AG04449 (cell line): ENCODE measurements at regions of chr11 and their contacts with region 1.

Region 1: GRCh38 chr11:76318744-76319384 is 62.1 kb downstream of the THAP12 start:
- DNase-seq: no peak
- H3K4me3 ChIP-seq: no peak overlapping the region
- CTCF ChIP-seq: peak; percentile 88

Region 2: DNA sequence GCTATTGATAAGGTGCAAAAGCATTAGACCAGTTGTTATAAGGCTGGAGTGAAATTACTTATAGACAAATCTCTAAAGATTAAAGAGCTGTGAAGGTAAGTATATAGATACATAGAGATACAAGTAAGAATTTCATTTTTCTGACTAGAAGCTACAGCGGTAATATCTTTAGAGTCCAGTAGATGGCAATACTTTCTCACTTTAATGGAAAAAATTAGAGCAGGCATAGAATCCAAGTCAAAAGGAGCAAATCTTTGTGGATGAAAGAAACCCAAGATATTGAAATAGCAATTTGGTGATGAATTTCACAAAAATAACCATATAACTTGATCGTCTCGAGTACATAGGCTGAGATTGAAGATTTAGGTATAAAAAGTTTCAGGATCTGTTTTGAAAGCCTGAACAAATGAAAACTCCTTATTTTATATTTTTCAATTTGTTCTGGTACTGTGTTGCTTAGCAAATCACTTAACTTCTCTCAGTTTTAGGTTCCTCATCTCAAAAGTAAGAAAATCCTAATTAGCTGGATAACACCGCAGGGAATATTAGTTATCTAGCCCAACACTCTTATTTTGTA is 421.9 kb before region 1 on chr11:
- CTCF ChIA-PET with region 1: interaction called, 90 read pairs
- POLR2A ChIA-PET with region 1: no interaction called
- DNase-seq: peak; percentile 16
- H3K4me3 ChIP-seq: no peak overlapping the region
- CTCF ChIP-seq: peak; percentile 31

Region 3: GRCh38 chr11:75903276-75903675 is 415.6 kb before region 1 on chr11:
- CTCF ChIA-PET with region 1: interaction called, 90 read pairs
- POLR2A ChIA-PET with region 1: no interaction called
- DNase-seq: no peak
- H3K4me3 ChIP-seq: no peak overlapping the region
- CTCF ChIP-seq: no peak

Region 4: DNA sequence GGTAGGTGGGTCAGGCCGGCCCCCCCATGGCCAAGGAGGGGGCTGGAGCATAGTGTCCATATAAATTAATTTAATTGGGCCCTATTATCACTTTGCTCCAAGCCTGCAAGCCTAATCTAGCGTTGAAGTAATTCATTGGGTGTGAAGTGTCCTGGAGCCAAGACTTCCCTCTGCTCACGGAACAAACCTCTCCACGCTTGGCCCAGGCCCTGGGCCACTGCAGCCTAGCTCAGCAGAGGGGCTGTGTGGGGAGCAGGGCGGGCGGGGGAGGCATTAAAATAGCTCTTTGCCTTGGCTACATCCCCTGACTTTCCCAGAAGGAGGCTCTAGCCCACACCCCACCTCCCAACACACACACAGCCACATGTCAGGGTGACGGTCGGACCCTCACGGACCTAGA is 11.5 kb before region 1 on chr11:
- CTCF ChIA-PET with region 1: interaction called, 18 read pairs
- POLR2A ChIA-PET with region 1: no interaction called
- DNase-seq: no peak
- H3K4me3 ChIP-seq: no peak overlapping the region
- CTCF ChIP-seq: no peak

Region 5: DNA sequence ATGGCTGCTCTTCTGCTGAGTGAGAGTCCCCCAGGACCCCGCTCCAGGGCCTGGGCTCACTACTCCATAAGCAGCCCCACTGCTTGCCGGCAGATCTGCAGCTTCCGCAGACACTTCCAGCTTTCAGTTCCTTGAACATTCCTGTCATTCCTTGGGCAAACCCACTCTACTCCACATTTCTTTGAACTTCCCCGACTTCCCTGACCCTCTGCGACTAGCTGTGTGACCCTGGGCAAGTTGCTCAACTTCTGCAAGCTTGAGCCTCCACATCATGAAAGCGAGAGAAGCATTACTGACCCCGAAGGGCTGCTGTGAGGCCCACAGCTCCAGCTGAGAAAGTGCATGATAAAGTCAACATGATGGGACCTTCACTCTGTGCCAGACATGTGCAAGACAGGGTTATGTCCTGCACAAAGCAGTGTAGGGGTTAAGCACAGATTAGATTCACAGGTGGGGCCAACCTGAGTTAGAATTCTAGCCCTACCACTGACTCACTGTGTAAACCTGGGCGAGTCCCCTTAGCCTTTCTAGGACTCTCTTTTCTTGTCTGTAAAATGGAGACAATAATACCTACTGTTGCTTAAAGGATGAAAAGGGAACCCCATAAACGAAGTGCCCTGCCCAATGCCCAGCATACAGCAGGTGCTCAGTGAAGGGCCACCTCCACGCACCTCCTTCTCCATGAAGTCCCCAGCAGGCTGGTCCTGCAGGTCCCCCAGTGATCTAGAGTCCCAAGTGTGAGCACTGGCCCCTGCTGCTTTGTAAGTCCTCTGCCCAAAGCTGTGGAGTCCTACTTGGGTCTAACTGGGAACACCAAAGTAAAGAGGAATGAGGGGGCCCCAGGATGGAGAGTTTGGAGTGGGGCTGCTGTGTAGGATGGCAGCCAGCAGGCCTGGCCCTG is 10.5 kb after region 1 on chr11:
- CTCF ChIA-PET with region 1: interaction called, 20 read pairs
- POLR2A ChIA-PET with region 1: no interaction called
- DNase-seq: no peak
- H3K4me3 ChIP-seq: no peak overlapping the region
- CTCF ChIP-seq: no peak

Region 6: DNA sequence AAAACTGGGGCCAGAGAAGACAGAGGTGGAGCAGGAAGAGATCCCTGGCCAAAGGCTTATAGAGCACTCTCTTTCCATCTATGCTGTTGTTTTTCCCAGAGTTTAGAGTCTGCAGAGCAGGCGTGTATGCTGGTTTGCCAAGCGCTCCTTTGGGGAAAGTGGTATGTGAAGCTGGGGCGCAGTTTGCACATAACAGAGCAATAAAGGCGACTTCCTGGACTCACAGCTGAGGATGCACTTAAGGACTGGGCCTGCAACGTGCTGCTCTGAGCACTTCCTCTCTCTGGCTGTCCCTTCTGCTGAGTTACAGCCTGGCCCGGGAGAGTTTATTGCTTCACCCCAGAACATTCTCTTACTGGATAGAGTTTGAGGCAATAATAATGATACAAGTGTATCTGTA is 20.4 kb after region 1 on chr11:
- CTCF ChIA-PET with region 1: interaction called, 19 read pairs
- POLR2A ChIA-PET with region 1: no interaction called
- DNase-seq: peak; percentile 47
- H3K4me3 ChIP-seq: no peak overlapping the region
- CTCF ChIP-seq: no peak